ENCODE measurements at regions of chr5 and their contacts with region 1.

Region 1: DNA sequence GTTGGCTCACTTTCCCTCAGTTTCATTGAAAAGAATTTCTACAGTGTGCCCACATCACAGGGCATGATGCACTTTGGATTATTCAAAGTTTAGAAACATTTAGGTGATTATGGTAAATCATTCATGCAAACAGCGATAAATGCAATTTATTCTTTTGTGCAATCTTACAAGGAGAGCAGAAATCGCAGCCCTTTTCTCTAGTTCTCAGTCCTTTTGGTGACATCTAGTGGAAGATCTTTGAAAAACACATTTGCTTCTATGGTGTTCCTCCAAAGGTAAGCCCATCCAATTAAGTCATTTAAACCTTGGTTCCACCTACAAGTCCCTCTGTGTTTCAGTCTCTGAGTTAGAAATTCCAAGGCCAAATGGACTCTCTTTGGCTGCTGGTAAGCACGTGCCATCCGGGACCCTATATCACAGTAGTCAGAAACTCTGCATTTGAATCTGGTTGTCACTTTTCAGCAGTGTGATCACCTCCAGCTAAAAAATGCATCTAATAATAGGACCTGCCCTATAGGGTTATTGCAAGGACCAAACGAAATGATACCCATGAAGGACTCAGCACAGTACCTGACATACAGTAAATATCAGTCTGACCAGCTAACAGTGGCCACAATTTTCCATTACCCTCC is 66.4 kb downstream of the MACROH2A1 start:
- DNase-seq: peak; percentile 59
- ATAC-seq: no peak
- H3K4me3 ChIP-seq: no peak overlapping the region
- H3K27ac ChIP-seq: no peak overlapping the region
- H3K4me1 ChIP-seq: peaks cover 35% of the 10 kb centered on the region
- H3K27me3 ChIP-seq: no peaks in the 10 kb centered on the region
- CTCF ChIP-seq: peak; percentile 78
- EP300 ChIP-seq: no peak
- POLR2A ChIP-seq: no peak
- RAD21 ChIP-seq: 0 out of 2 replicates have a peak, but pooled peaks have one; percentile 44

Region 2: GRCh38 chr5:135024956-135025729 is 307.5 kb before region 1 on chr5:
- CTCF ChIA-PET with region 1: no interaction called
- POLR2A ChIA-PET with region 1: no interaction called
- in situ Hi-C with region 1: loop called (anchors 10 kb)
- intact Hi-C with region 1: loop called (anchors 10 kb)
- DNase-seq: no peak
- ATAC-seq: peak; percentile 9; the same call in 1 of the 3 replicates
- H3K4me3 ChIP-seq: no peak overlapping the region
- H3K27ac ChIP-seq: no peak overlapping the region
- H3K4me1 ChIP-seq: peaks cover 18% of the 10 kb centered on the region
- H3K27me3 ChIP-seq: no peaks in the 10 kb centered on the region
- CTCF ChIP-seq: no peak
- EP300 ChIP-seq: no peak
- POLR2A ChIP-seq: no peak
- RAD21 ChIP-seq: no peak

Region 3: GRCh38 chr5:135191084-135191826 is 141.4 kb before region 1 on chr5:
- CTCF ChIA-PET with region 1: interaction called, 3 read pairs
- POLR2A ChIA-PET with region 1: no interaction called
- in situ Hi-C with region 1: no loop called
- intact Hi-C with region 1: loop called (anchors 1 kb)
- DNase-seq: peak; percentile 68
- ATAC-seq: peak; percentile 98
- H3K4me3 ChIP-seq: peak overlapping the region; percentile 72 to 82 (median 76)
- H3K27ac ChIP-seq: no peak overlapping the region
- H3K4me1 ChIP-seq: peaks cover 5% of the 10 kb centered on the region; the same call in 1 of the 2 replicates
- H3K27me3 ChIP-seq: no peaks in the 10 kb centered on the region; a peak in 1 of 5 replicates
- CTCF ChIP-seq: peak; percentile 100
- EP300 ChIP-seq: no peak
- POLR2A ChIP-seq: peak in 1 of 2 experiments; percentile 44; a peak in 1 of 4 replicates
- RAD21 ChIP-seq: peak; percentile 99

Region 4: GRCh38 chr5:135203593-135204036 is 129.0 kb before region 1 on chr5:
- CTCF ChIA-PET with region 1: interaction called, 10 read pairs
- POLR2A ChIA-PET with region 1: no interaction called
- in situ Hi-C with region 1: no loop called
- intact Hi-C with region 1: loop called (anchors 2 kb)
- DNase-seq: peak; percentile 45
- ATAC-seq: no peak; the same call in 2 of the 3 replicates
- H3K4me3 ChIP-seq: no peak overlapping the region
- H3K27ac ChIP-seq: no peak overlapping the region
- H3K4me1 ChIP-seq: peaks cover 12% of the 10 kb centered on the region
- H3K27me3 ChIP-seq: no peaks in the 10 kb centered on the region
- CTCF ChIP-seq: peak; percentile 41
- EP300 ChIP-seq: no peak
- POLR2A ChIP-seq: no peak
- RAD21 ChIP-seq: no peak

Region 5: DNA sequence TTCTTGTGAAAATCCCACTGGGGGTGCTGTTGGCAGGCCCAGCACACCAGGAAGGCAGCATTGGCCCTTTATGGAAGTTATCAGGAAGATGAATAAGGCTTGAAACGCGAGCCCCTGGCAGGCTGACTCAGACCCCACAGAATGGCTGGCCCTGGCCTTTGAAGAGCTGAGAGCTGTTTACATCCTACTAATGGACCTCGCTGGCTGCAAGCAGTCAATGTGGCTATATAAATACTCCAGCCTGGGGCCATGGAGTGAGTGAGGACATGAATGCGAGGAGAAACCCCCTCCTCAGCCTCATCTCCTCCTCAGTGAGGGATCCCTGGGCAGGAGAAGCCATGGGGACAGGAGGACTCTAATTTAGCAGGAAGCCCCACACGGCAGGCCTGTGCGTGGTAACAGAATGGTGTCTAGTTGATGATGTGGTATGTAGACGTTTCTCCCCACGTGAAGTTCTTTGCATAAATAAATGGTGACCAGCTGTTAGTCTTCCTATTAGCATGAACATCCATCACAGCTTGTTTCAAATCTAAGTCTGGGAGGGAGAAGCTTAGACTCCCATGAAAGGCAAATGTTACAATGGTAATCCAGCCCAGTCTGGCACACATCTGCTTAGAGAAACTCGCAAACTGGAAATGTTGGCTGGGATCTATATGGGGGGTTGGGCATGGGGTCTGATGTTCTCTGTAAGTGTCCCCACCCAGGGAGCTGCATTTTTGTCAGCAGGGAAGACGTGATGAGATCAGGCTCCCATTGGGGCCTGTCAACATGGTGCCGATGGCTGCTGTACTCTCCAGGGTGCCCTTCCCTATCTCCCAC is 123.5 kb before region 1 on chr5:
- CTCF ChIA-PET with region 1: interaction called, 10 read pairs
- POLR2A ChIA-PET with region 1: no interaction called
- in situ Hi-C with region 1: no loop called
- intact Hi-C with region 1: loop called (anchors 1 kb)
- DNase-seq: peak; percentile 79
- ATAC-seq: peak; percentile 83
- H3K4me3 ChIP-seq: no peak overlapping the region
- H3K27ac ChIP-seq: no peak overlapping the region
- H3K4me1 ChIP-seq: peaks cover 21% of the 10 kb centered on the region
- H3K27me3 ChIP-seq: no peaks in the 10 kb centered on the region
- CTCF ChIP-seq: peak; percentile 13; the same call in 1 of the 2 replicates
- EP300 ChIP-seq: peak in 1 of 2 experiments; percentile 12; a peak in 1 of 4 replicates
- POLR2A ChIP-seq: no peak
- RAD21 ChIP-seq: no peak

Region 6: GRCh38 chr5:135303582-135304173 is 29.0 kb before region 1 on chr5:
- CTCF ChIA-PET with region 1: no interaction called
- POLR2A ChIA-PET with region 1: no interaction called
- in situ Hi-C with region 1: no loop called
- intact Hi-C with region 1: no loop called
- DNase-seq: no peak
- ATAC-seq: peak; percentile 10; the same call in 2 of the 3 replicates
- H3K4me3 ChIP-seq: no peak overlapping the region
- H3K27ac ChIP-seq: peak overlapping the region; percentile 63
- H3K4me1 ChIP-seq: peaks cover 55% of the 10 kb centered on the region
- H3K27me3 ChIP-seq: no peaks in the 10 kb centered on the region
- CTCF ChIP-seq: no peak
- EP300 ChIP-seq: no peak
- POLR2A ChIP-seq: no peak
- RAD21 ChIP-seq: no peak

Region 7: DNA sequence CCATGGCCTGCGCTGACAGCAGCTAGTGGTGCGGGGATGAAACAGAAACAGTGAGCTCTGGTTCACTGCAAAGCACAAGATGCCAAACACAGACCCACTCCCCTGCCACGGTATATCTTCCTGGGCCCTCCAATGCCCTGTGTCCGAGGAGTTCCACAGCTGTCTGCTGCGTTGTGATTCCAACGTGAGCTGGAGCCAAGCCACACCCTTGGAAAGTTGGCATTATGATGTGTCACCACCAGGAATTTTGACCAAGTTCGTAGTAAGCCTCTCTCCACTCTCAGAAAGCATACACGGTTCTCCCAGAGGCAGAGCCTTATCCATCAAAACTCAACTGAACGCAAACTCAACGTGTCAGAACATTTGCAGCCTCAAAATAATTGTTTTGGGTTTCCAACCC is 10.8 kb after region 1 on chr5:
- CTCF ChIA-PET with region 1: no interaction called
- POLR2A ChIA-PET with region 1: no interaction called
- in situ Hi-C with region 1: no loop called
- intact Hi-C with region 1: no loop called
- DNase-seq: no peak
- ATAC-seq: no peak
- H3K4me3 ChIP-seq: no peak overlapping the region
- H3K27ac ChIP-seq: no peak overlapping the region
- H3K4me1 ChIP-seq: peaks cover 14% of the 10 kb centered on the region; the same call in 1 of the 2 replicates
- H3K27me3 ChIP-seq: no peaks in the 10 kb centered on the region
- CTCF ChIP-seq: no peak
- EP300 ChIP-seq: no peak
- POLR2A ChIP-seq: no peak
- RAD21 ChIP-seq: no peak

Region 8: DNA sequence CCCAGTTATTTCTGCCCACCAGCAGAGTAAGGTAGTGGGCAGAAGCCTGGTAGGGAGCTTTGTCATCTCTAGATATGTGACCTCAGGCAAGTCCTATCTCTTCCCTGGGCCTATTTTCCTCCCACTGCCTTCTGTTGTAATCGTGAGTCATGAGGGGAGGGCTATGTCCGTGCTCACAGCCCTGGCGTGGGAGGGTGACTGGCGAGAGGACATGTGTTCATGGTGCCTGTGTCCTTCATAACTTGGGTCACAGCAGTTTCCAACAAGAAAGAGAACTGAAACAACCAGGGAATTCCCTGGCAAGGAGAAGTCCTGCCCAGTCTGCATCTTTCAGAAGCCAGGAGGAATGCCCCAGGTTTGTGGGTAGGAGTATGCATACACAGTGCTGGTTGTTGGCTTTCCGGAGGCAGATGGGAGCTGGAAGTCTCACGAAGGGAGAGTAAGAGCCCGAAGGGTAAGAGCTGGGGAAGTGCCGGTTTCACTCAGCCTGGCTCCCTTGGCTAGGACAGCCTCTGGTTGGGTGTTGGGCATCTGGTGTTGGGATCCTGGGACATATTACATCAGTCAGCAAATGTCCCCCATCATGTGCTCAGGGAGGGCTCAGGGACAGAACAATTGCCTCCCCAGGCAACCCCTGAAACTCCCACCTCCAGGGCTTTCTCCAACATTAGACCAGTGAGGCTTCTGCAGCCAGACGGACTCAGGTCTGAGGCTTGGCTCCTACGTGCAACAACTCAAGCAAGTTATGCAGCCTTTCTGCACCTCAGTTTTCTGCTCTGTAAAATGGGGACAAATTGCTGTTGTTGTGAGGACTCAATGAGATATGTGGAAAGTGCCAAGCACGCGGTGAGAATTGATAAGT is 123.8 kb after region 1 on chr5:
- CTCF ChIA-PET with region 1: no interaction called
- POLR2A ChIA-PET with region 1: no interaction called
- in situ Hi-C with region 1: no loop called
- intact Hi-C with region 1: no loop called
- DNase-seq: peak; percentile 16
- ATAC-seq: peak; percentile 40; the same call in 1 of the 3 replicates
- H3K4me3 ChIP-seq: no peak overlapping the region
- H3K27ac ChIP-seq: no peak overlapping the region
- H3K4me1 ChIP-seq: no peaks in the 10 kb centered on the region
- H3K27me3 ChIP-seq: peaks cover 2 to 17% of the 10 kb centered on the region in 2 experiments; a peak in 2 of 5 replicates
- CTCF ChIP-seq: no peak
- EP300 ChIP-seq: no peak
- POLR2A ChIP-seq: no peak
- RAD21 ChIP-seq: no peak